Gastrocnemius medialis (tissue), 4 donors: ENCODE measurements at regions of chr11 and their contacts with region 1.

Region 1: DNA sequence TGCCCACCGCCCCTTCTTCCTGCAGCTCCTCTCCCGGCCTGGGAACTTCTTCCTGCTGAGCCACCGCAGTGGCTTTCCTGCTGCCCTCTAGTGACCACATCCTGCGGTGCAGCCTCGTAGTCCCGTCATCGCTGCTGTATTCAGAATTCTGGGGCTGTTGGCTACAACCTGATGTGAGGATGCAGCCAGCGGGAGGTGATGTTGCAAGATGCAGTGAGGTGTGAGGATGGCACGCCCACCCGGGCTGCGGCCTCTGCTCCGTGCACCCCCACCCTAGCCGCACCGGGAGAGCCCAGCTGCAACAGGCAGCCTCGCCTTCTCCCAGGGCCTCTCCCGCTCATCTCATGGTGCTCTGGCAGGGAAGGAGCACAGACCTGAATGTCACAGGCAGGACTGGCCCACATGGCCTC is 10.1 kb downstream of the CHST1 start:
- DNase-seq: peak; percentile 38 to 63
- ATAC-seq: peak; percentile 78 to 79
- H3K4me3 ChIP-seq: no peak overlapping the region
- H3K27ac ChIP-seq: no peak overlapping the region
- H3K4me1 ChIP-seq: peaks cover 11 to 17% of the 10 kb centered on the region in 2 donors
- H3K27me3 ChIP-seq: peaks cover 0 to 5% (median 5%) of the 10 kb centered on the region in 3 donors
- CTCF ChIP-seq: peak; percentile 79 to 95 (median 85)
- POLR2A ChIP-seq: no peak

Region 2: DNA sequence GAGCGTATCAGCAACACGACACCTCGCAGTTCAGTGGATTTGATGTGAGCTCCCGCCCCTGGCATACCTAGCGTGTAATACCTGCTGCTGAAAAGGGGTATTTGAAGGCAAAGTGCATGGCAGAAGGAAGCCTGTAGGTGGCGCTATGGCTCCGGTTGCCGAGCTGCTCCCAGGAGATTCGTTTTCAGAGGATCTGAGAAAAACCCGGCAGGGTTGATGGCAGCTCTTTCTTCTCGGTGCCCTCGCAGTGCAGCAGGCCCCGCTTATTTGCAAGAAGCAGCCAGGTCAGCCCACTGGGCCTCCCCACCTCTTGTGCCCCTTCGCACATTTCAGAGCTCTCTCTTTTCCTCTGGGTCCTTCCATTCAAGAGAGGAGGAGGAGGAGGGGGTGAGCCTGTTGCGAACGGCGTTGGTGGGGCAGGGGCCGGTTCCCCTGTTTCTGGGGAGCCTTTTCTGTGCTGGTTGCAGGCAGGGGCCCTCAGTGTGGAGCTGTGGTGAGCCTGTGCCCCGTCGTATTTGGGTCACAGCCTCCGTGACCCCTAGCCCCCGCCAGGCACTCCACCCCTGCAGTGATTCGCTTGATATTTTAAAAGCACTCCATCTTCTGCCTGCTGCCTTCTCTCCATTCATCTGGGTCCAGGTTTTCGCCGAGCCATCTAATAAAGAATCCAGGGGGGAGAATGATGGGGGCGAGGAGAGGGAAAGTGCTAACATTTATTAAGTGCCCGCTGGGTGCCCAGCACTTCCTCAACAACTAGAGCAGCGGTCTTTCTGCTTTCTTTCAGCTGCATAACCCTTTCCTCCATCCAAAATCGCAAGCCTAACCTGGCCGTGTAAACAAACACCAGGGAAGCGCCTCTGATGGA is 283.9 kb before region 1 on chr11:
- in situ Hi-C with region 1: loop called in 3 of 4 experiments (anchors 25 kb)
- intact Hi-C with region 1: loop called (anchors 1 kb)
- DNase-seq: peak in 1 of 2 donors; percentile 45
- ATAC-seq: peak; percentile 68 to 75
- H3K4me3 ChIP-seq: no peak overlapping the region
- H3K27ac ChIP-seq: no peak overlapping the region
- H3K4me1 ChIP-seq: no peaks in the 10 kb centered on the region
- H3K27me3 ChIP-seq: no peaks in the 10 kb centered on the region
- CTCF ChIP-seq: peak; percentile 64 to 88 (median 76)
- POLR2A ChIP-seq: no peak

Region 3: GRCh38 chr11:45538363-45538762 is 117.0 kb before region 1 on chr11:
- in situ Hi-C with region 1: loop called in 1 of 4 experiments (anchors 5 kb)
- intact Hi-C with region 1: loop called (anchors 1 kb)
- DNase-seq: peak; percentile 35 to 58
- ATAC-seq: peak; percentile 99
- H3K4me3 ChIP-seq: no peak overlapping the region
- H3K27ac ChIP-seq: peak overlapping the region in 1 of 4 donors; percentile 42
- H3K4me1 ChIP-seq: peaks cover 0 to 6% of the 10 kb centered on the region in 2 donors
- H3K27me3 ChIP-seq: no peaks in the 10 kb centered on the region
- CTCF ChIP-seq: peak; percentile 21 to 66 (median 35)
- POLR2A ChIP-seq: no peak